GM10248 (cell line): ENCODE measurements at regions of chr10 and their contacts with region 1.

Region 1: GRCh38 chr10:94423627-94424026 is 21.3 kb downstream of the TBC1D12 start:
- DNase-seq: no peak
- CTCF ChIP-seq: no peak

Region 2: GRCh38 chr10:94412449-94412848 is 11.2 kb before region 1 on chr10:
- CTCF ChIA-PET with region 1: interaction called, 10 read pairs
- POLR2A ChIA-PET with region 1: no interaction called
- DNase-seq: no peak
- CTCF ChIP-seq: no peak

Region 3: GRCh38 chr10:94450782-94451181 is 27.2 kb after region 1 on chr10:
- CTCF ChIA-PET with region 1: no interaction called
- POLR2A ChIA-PET with region 1: no interaction called
- DNase-seq: no peak
- CTCF ChIP-seq: no peak